Activated CD4-positive, alpha-beta T cell treated with anti-CD3 and anti-CD28 coated beads, Interleukin-2, amount 10 ng/mL, durations not matched to agents 24 days and 14 days (primary cell): ENCODE measurements at regions of chr2 and their contacts with region 1.

Region 1: DNA sequence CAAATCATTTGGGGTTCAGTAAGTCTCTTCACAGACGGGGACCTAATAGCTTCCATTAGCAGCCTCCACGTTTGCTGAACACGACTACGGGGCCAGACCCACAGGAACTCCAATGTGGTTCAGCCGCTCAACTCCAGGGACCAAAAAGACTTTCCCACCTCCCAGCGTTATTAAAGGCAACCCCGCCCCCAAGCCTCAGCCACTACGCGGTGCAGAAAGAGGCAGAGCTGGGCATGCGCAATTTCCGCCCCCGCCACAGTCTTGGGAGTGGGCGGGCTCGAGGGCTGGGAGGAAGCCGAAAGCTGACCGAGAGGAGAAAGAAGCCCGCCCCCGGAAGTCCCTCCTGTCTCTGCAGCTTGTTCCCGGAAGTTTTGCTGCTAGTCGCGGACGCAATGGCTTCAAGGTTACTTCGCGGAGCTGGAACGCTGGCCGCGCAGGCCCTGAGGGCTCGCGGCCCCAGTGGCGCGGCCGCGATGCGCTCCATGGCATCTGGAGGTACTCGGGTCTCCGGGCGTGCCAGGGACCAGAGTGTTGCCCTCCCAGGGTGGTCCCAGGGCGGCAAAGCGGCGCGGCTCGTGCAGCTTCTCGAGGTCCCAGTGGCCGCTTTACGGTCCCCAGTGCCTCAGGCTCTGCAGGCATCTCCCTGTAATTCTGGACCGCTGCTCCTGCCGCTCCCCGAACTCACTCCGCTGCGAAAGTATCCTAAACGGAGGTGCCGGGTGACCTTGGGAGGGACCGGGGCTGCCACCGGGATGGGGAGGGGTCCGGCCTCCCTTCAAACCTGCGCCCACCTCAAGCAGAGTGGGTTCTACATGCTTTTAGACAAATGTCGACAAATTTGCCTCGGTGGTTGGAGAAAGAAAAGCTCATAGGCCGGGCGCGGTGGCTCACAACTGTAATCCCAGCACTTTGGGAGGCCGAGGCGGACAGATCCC is at the start of gene COX5B:
- DNase-seq: peak; percentile 100
- H3K4me3 Mint-ChIP-seq: peak within 1 kb of the TSS; percentile 94
- H3K27ac Mint-ChIP-seq: peak within 1 kb of the TSS; percentile 96
- H3K4me1 Mint-ChIP-seq: peaks cover 26% of the 10 kb centered on the region
- H3K27me3 Mint-ChIP-seq: peaks cover 4% of the 10 kb centered on the region
- total RNA-seq, gene COX5B: 227 and 233 TPM in 2 replicates

Region 2: GRCh38 chr2:97617911-97618310 is 28.1 kb before region 1 on chr2:
- intact Hi-C with region 1: no loop called
- DNase-seq: no peak
- H3K4me3 Mint-ChIP-seq: no peak overlapping the region
- H3K27ac Mint-ChIP-seq: no peak overlapping the region
- H3K4me1 Mint-ChIP-seq: peaks cover 3% of the 10 kb centered on the region
- H3K27me3 Mint-ChIP-seq: no peaks in the 10 kb centered on the region

Region 3: GRCh38 chr2:97663965-97664635 is 18.1 kb after region 1 on chr2 and contains the start of gene ACTR1B:
- intact Hi-C with region 1: loop called (anchors 1 kb)
- DNase-seq: peak; percentile 99
- H3K4me3 Mint-ChIP-seq: peak within 1 kb of the TSS; percentile 94
- H3K27ac Mint-ChIP-seq: peak within 1 kb of the TSS; percentile 98
- H3K4me1 Mint-ChIP-seq: peaks cover 30% of the 10 kb centered on the region
- H3K27me3 Mint-ChIP-seq: no peaks in the 10 kb centered on the region
- total RNA-seq, gene ACTR1B: 122 TPM in 2 replicates

Region 4: GRCh38 chr2:97740590-97741182 is 94.7 kb after region 1 on chr2:
- intact Hi-C with region 1: no loop called
- DNase-seq: peak; percentile 82
- H3K4me3 Mint-ChIP-seq: no peak overlapping the region
- H3K27ac Mint-ChIP-seq: peak overlapping the region; percentile 76
- H3K4me1 Mint-ChIP-seq: peaks cover 58% of the 10 kb centered on the region
- H3K27me3 Mint-ChIP-seq: no peaks in the 10 kb centered on the region